ENCODE measurements at regions of chr17 and their contacts with region 1.

Region 1: DNA sequence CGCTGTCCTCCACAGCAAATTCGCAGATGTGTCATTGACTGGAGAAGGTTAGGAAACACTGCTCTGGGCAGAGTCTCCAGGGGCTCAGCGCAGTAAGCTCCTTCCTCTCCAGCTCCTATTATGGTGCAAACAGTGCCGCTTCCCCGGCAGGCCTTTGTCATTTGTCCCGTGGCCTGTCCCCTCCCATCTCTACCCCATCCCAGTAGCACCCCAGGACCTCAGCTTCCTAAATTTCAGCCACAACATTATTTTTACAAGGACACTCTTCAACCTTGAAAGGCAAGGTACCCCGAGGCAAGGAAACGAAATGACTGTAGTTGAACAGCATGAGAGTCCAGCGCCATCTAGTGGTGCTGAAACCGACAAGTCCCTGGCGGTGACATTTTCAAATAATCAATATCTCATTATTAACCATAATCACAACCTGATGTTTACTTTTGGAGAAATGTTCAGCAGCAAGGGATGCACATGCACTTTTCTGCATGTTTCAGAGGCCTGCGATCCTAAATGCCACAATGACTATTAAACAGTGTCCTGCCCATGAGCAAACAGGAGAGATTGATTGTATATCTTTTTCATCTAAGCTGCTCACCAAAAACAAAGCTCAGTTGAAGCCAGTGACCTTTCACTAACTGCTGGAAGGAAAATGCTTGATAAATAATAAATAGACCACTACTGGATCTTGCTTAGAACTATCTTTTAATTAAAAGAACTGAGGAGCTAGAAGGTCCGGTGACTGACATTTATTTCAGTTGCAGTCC is 16.5 kb downstream of the MRPS23 start:
- DNase-seq: peak in 9 of 10 donors; percentile 36 to 74 (median 62)
- H3K4me3 ChIP-seq: peak overlapping the region in 58 of 59 donors; percentile 14 to 67 (median 49)
- H3K27ac ChIP-seq: peak overlapping the region in 52 of 59 donors; percentile 1 to 87 (median 68)
- H3K27me3 ChIP-seq: no peaks in the 10 kb centered on the region
- CTCF ChIP-seq: peak; percentile 75 to 97 (median 90)

Region 2: GRCh38 chr17:57243171-57243948 is 590.0 kb before region 1 on chr17:
- intact Hi-C with region 1: loop called in 1 of 2 experiments (anchors 10 kb)
- DNase-seq: peak in 6 of 10 donors; percentile 23 to 64 (median 48)
- H3K4me3 ChIP-seq: no peak overlapping the region
- H3K27ac ChIP-seq: no peak overlapping the region
- H3K27me3 ChIP-seq: no peaks in the 10 kb centered on the region
- CTCF ChIP-seq: peak; percentile 60 to 99 (median 94)

Region 3: GRCh38 chr17:57604771-57605674 is 228.3 kb before region 1 on chr17:
- intact Hi-C with region 1: loop called in 1 of 2 experiments (anchors 5 kb)
- DNase-seq: peak; percentile 23 to 67 (median 56)
- H3K4me3 ChIP-seq: peak overlapping the region in 49 of 59 donors; percentile 3 to 58 (median 28)
- H3K27ac ChIP-seq: peak overlapping the region; percentile 8 to 88 (median 74)
- H3K27me3 ChIP-seq: no peaks in the 10 kb centered on the region
- CTCF ChIP-seq: peak in 8 of 56 donors; percentile 10 to 21 (median 16)

Region 4: DNA sequence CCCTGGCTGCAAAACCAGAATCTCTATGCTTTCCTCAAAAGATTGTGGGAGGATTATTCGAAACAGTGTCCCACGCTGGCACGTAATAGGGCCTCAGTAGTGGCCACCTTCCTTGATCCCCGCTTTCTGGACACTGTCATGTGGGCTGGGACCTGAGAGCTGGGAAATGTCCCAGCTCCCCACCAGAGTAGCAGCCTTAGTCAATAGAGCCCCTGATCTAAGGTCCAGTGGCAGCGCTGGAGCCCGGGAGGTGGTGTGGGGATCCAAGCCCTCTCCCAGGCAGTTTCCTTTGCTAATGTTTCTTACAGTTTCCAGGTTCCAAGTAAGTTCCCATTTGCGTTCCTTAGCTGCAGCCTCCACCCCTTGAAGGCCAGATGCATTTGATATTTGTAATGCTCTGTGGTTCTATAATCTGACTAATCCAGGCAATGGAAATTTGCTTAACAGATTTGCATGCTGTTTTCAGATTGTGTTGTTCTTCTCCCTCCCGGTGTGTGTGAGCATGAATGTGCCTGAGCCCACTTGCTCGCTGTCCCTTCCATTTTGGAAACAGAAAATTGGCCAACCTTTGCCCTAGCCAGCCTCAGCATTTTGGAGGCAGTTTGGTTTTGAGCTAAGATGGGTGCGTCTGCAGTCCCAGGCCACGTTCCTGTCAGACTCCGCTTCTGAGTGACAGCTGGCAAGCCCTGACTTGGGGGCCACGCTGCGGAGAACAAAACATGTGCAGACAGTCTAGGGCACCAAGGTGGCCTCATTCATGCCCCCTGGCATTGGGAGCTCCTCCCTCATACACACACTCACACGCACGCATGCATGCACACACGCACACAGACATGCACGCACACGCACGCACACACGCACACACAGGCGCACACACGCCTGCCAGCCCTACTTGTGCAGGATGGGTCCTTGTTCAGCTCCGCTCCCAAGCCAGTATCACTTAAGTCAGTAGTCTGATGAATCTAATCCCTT is 157.6 kb before region 1 on chr17:
- intact Hi-C with region 1: no loop called
- DNase-seq: no peak
- H3K4me3 ChIP-seq: no peak overlapping the region
- H3K27ac ChIP-seq: peak overlapping the region in 16 of 59 donors; percentile 6 to 62 (median 38)
- H3K27me3 ChIP-seq: no peaks in the 10 kb centered on the region
- CTCF ChIP-seq: no peak

Region 5: GRCh38 chr17:57747221-57748017 is 85.9 kb before region 1 on chr17:
- intact Hi-C with region 1: loop called in 1 of 2 experiments (anchors 5 kb)
- DNase-seq: peak in 6 of 10 donors; percentile 11 to 59 (median 52)
- H3K4me3 ChIP-seq: no peak overlapping the region
- H3K27ac ChIP-seq: no peak overlapping the region
- H3K27me3 ChIP-seq: no peaks in the 10 kb centered on the region
- CTCF ChIP-seq: peak; percentile 43 to 90 (median 75)

Region 6: DNA sequence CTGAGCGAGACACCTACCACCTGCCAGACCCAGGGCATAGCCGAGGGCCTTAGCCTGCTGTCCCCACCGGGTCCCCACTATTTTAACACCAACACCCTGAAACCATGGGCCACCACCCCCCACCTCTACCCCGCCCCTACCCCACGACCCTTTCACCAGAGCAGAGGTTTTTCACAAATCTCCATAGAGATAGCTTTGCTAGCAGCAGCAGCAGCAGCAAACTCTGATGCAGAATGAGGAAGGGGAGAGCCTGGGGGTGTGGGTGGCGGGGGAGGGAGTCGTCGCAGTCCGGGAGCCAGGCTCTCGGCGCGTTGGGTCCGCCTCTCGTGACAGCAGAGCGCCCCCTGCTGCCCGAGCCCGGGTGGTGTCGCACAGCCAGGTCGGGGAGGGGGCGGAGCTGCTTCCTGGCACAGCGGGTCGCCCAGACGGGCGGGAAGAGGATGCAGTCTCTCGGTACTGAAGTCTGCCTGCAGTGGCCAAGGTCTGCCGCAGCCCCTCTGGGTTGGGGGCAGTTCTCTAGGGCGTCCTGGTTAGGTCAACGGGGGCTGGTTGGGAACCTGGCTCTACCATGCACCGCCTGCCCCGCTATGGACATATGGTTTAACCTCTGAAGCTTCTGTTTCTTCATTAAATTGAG is 50.1 kb before region 1 on chr17:
- intact Hi-C with region 1: loop called in 1 of 2 experiments (anchors 2 kb)
- DNase-seq: peak in 9 of 10 donors; percentile 55 to 77 (median 66)
- H3K4me3 ChIP-seq: peak overlapping the region in 57 of 59 donors; percentile 6 to 61 (median 36)
- H3K27ac ChIP-seq: peak overlapping the region in 4 of 59 donors; percentile 17 to 54 (median 28)
- H3K27me3 ChIP-seq: peaks cover 0 to 10% (median 0%) of the 10 kb centered on the region in 45 donors
- CTCF ChIP-seq: peak; percentile 60 to 93 (median 87)

Region 7: GRCh38 chr17:57849874-57850754 is 16.8 kb after region 1 on chr17 and contains the start of gene MRPS23:
- intact Hi-C with region 1: loop called in 1 of 2 experiments (anchors 2 kb)
- DNase-seq: peak; percentile 95 to 99 (median 98)
- H3K4me3 ChIP-seq: peak within 1 kb of the TSS; percentile 67 to 100 (median 94)
- H3K27ac ChIP-seq: peak within 1 kb of the TSS; percentile 53 to 97 (median 91)
- H3K27me3 ChIP-seq: no peaks in the 10 kb centered on the region
- CTCF ChIP-seq: peak in 37 of 56 donors; percentile 7 to 58 (median 36)
- total RNA-seq, gene MRPS23: 32.8 to 72.7 (median 51.3) TPM